ENCODE measurements at regions of chr3 and their contacts with region 1.

Region 1: DNA sequence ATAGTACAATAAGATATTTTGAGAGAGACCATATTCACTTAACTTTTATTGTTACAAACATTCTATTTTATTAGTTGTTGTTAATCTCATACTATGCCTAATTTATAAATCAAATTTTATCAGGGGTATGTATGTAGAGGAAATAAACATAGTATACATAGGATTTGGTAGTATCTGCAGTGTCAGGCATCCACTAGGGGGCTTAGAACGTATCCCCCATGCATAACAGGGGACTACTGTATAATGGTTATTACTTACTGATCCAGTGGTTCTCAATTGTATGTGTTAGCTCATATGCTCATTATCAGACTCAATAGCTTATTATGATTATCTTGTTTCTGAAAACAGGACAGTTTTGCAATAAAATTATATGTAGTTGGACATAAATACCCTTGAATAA is 27.6 kb downstream of the CMC1 start:
- DNase-seq: no peak
- ATAC-seq: no peak
- H3K4me3 ChIP-seq: no peak overlapping the region
- H3K4me3 Mint-ChIP-seq: no peak overlapping the region
- H3K27ac ChIP-seq: no peak overlapping the region
- H3K27ac Mint-ChIP-seq: no peak overlapping the region
- H3K4me1 ChIP-seq: no peaks in the 10 kb centered on the region
- H3K4me1 Mint-ChIP-seq: peaks cover 10 to 12% (median 11%) of the 10 kb centered on the region in 3 donors
- H3K27me3 ChIP-seq: no peaks in the 10 kb centered on the region
- H3K27me3 Mint-ChIP-seq: no peaks in the 10 kb centered on the region

Region 2: GRCh38 chr3:28178924-28179323 is 90.1 kb before region 1 on chr3:
- CTCF ChIA-PET with region 1: no interaction called
- POLR2A ChIA-PET with region 1: no interaction called
- DNase-seq: no peak
- ATAC-seq: no peak
- H3K4me3 ChIP-seq: no peak overlapping the region
- H3K4me3 Mint-ChIP-seq: no peak overlapping the region
- H3K27ac ChIP-seq: no peak overlapping the region
- H3K27ac Mint-ChIP-seq: no peak overlapping the region
- H3K4me1 ChIP-seq: no peaks in the 10 kb centered on the region
- H3K4me1 Mint-ChIP-seq: no peaks in the 10 kb centered on the region
- H3K27me3 ChIP-seq: no peaks in the 10 kb centered on the region
- H3K27me3 Mint-ChIP-seq: no peaks in the 10 kb centered on the region

Region 3: DNA sequence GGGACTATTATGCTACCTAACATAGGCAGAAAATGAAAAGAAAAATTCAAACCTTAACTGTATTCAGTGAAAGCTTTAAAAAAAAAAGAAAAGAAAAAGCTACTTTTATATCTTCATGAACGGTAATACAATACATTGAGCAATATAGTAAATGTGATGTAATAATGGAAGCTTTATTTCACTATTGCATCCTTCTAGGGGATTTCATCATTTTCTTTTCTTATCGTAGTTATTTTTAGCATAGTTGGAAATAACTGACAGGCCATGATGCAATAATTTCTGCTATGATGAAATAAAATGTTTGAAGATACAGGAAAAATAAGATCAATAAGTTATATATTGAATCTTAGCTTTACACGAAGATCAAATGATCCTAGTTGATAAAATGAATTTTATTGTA is 39.2 kb after region 1 on chr3:
- CTCF ChIA-PET with region 1: no interaction called
- POLR2A ChIA-PET with region 1: interaction called in 1 of 2 experiments, 10 read pairs
- DNase-seq: no peak
- ATAC-seq: no peak
- H3K4me3 ChIP-seq: no peak overlapping the region
- H3K4me3 Mint-ChIP-seq: no peak overlapping the region
- H3K27ac ChIP-seq: no peak overlapping the region
- H3K27ac Mint-ChIP-seq: no peak overlapping the region
- H3K4me1 ChIP-seq: no peaks in the 10 kb centered on the region
- H3K4me1 Mint-ChIP-seq: peaks cover 9 to 20% (median 12%) of the 10 kb centered on the region in 3 donors
- H3K27me3 ChIP-seq: no peaks in the 10 kb centered on the region
- H3K27me3 Mint-ChIP-seq: no peaks in the 10 kb centered on the region

Measured in T-cell (primary cell).